Activated B cell treated with CpG ODN at 0.5 μM for 24 hours (primary cell): ENCODE measurements at regions of chr15 and their contacts with region 1.

Region 1: GRCh38 chr15:90931737-90932659 is at the start of gene HDDC3:
- DNase-seq: peak; percentile 95
- ATAC-seq: peak; percentile 56
- H3K4me3 Mint-ChIP-seq: peak within 1 kb of the TSS; percentile 96
- H3K27ac Mint-ChIP-seq: peak within 1 kb of the TSS; percentile 97
- H3K4me1 Mint-ChIP-seq: peaks cover 53% of the 10 kb centered on the region
- H3K27me3 Mint-ChIP-seq: no peaks in the 10 kb centered on the region
- CTCF ChIP-seq: peak; percentile 85
- total RNA-seq, gene HDDC3: 17.6 and 19.0 TPM in 2 replicates

Region 2: DNA sequence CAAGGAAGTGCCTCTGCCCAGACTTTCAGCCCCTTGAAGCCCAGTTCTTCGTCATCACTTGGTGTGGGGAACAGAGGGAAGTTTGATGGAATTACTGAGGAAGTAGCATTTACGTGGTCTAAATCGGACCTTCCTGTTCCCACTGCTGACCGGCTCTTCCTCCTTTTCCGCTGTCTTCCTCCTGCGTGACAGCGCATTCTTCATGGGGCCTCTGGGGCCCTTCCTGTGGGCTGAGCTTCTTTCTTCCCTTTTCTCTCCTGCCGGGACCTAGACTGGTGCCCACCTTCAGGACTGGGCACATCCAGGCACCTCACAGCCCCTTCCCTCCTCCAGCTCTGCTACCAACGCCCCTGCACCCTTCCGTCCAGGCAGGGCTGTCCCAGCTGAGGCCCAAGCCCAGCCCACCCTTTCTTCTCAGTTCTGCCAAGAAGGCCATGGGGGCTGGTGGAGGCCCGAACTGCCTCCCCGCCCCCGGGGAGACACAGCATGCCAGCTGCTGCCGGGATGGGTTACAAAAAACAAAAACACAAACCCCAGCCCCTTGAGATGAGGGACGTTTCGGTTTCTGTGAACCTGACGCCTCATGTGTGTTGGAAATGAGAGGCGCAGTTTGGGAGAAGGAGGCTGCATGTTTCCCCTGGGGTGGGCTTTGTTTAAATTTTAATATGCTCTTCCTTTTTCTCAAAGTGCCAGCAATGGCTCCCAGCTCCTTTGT is 911.8 kb before region 1 on chr15:
- CTCF ChIA-PET with region 1: no interaction called
- POLR2A ChIA-PET with region 1: no interaction called
- intact Hi-C with region 1: no loop called
- DNase-seq: no peak
- ATAC-seq: no peak
- H3K4me3 Mint-ChIP-seq: no peak overlapping the region
- H3K27ac Mint-ChIP-seq: no peak overlapping the region
- H3K4me1 Mint-ChIP-seq: peaks cover 29% of the 10 kb centered on the region
- H3K27me3 Mint-ChIP-seq: no peaks in the 10 kb centered on the region
- CTCF ChIP-seq: no peak

Region 3: DNA sequence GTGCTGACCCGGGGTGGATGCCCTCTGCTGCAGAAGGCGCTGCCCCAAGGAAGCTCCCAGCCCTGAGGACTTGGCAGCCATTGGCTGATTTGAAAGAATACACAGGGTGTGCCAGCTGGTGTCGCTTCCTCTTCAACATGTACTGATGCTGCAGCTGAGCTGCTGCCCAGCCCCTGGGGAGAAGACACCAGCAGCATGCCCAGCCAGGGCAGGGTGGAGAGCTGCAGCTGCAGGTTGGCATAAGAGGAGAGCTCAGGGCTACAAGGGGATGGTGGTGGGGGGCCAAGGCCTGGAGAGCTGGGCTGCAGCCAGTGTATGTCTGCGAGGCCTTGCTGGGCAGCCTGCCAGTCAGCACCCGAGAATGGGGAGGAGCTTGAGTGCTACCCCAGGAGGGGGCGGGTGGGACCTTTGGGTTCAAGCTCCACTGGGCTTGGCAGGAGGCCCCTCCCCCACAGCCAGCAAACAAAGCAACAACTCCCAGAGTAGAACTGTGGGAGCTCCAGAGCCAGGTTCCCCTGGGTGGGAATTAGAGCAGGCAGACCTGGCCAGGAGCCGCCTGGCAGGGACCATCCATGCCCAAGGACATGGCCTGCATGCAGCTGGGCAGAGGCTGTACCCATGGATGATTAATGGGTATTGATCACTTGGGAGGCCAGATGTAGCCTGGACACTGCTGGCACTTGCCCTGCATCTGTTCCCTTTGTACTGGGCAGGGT is 740.0 kb before region 1 on chr15:
- CTCF ChIA-PET with region 1: no interaction called
- POLR2A ChIA-PET with region 1: no interaction called
- intact Hi-C with region 1: loop called (anchors 5 kb)
- DNase-seq: peak; percentile 69
- ATAC-seq: peak; percentile 75
- H3K4me3 Mint-ChIP-seq: peak overlapping the region; percentile 77
- H3K27ac Mint-ChIP-seq: peak overlapping the region; percentile 98
- H3K4me1 Mint-ChIP-seq: peaks cover 97% of the 10 kb centered on the region
- H3K27me3 Mint-ChIP-seq: no peaks in the 10 kb centered on the region
- CTCF ChIP-seq: no peak

Region 4: GRCh38 chr15:90387537-90388461 is 544.2 kb before region 1 on chr15 and contains the start of gene IQGAP1:
- CTCF ChIA-PET with region 1: interaction called, 3 read pairs
- POLR2A ChIA-PET with region 1: interaction called, 10 read pairs
- intact Hi-C with region 1: loop called (anchors 1 kb)
- DNase-seq: peak; percentile 88
- ATAC-seq: peak; percentile 85
- H3K4me3 Mint-ChIP-seq: peak within 1 kb of the TSS; percentile 93
- H3K27ac Mint-ChIP-seq: peak within 1 kb of the TSS; percentile 95
- H3K4me1 Mint-ChIP-seq: peaks cover 47% of the 10 kb centered on the region
- H3K27me3 Mint-ChIP-seq: no peaks in the 10 kb centered on the region
- CTCF ChIP-seq: no peak
- total RNA-seq, gene IQGAP1: 187 and 227 TPM in 2 replicates

Region 5: GRCh38 chr15:90665288-90666134 is 266.5 kb before region 1 on chr15:
- CTCF ChIA-PET with region 1: interaction called, 3 read pairs
- POLR2A ChIA-PET with region 1: interaction called, 4 read pairs
- intact Hi-C with region 1: loop called (anchors 5 kb)
- DNase-seq: peak; percentile 62
- ATAC-seq: peak; percentile 90
- H3K4me3 Mint-ChIP-seq: peak overlapping the region; percentile 85
- H3K27ac Mint-ChIP-seq: peak overlapping the region; percentile 84
- H3K4me1 Mint-ChIP-seq: peaks cover 55% of the 10 kb centered on the region
- H3K27me3 Mint-ChIP-seq: peaks cover 13% of the 10 kb centered on the region
- CTCF ChIP-seq: no peak

Region 6: GRCh38 chr15:90789462-90789861 is 142.5 kb before region 1 on chr15:
- CTCF ChIA-PET with region 1: no interaction called
- POLR2A ChIA-PET with region 1: no interaction called
- intact Hi-C with region 1: no loop called
- DNase-seq: no peak
- ATAC-seq: no peak
- H3K4me3 Mint-ChIP-seq: no peak overlapping the region
- H3K27ac Mint-ChIP-seq: no peak overlapping the region
- H3K4me1 Mint-ChIP-seq: peaks cover 18% of the 10 kb centered on the region
- H3K27me3 Mint-ChIP-seq: no peaks in the 10 kb centered on the region
- CTCF ChIP-seq: no peak

Region 7: DNA sequence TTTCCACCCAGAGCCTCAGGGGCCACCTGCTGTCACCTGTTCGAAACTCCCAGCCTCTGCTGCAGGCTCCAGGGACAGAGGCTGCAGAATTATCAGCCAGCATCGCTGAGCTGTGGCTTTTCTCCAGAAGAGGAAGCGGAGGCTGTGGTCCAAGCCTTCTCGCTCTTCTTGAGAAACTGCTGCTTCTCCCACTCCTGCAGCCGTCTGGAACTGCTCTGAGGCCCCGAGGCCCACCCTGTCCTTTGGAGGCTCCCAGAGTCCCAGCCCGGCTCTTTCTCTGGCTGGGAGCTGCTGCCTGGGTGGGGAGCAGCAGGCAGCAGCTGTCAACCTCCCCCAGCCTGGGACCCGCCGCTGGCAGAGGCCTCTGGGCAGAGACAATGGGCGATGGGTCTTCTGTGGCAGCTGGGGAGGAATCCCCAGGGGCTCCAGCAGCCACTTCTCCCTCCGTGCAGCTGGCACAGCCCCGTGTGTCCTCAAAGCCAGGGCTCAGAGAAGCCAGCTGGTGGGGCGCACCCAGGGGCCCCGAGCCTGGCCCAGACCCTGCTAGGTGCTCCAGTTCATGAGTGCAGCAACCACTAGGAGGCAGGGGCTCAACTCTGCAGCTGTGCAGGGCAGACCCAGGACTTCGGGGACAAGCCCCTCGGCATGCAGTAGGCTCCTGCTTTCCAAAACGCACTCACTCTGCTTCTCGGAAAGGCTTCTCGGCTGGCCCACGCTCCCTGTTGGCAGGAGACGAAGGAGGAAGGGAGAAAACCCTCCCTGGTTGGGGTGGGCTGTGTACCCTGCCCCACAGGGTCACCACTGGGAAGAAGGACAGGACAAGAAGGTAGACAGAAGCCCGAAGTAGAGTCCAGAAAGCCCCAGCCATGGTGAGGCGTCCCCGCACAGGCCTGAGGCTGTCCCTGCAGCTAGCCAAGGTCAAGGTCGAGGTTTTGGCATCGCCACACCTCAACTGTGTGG is 113.5 kb before region 1 on chr15:
- CTCF ChIA-PET with region 1: interaction called, 12 read pairs
- POLR2A ChIA-PET with region 1: interaction called, 7 read pairs
- intact Hi-C with region 1: loop called (anchors 2 kb)
- DNase-seq: peak; percentile 60
- ATAC-seq: peak; percentile 95
- H3K4me3 Mint-ChIP-seq: peak overlapping the region; percentile 41
- H3K27ac Mint-ChIP-seq: peak overlapping the region; percentile 66
- H3K4me1 Mint-ChIP-seq: peaks cover 46% of the 10 kb centered on the region
- H3K27me3 Mint-ChIP-seq: no peaks in the 10 kb centered on the region
- CTCF ChIP-seq: no peak

Region 8: GRCh38 chr15:90902040-90902839 is 29.8 kb before region 1 on chr15:
- CTCF ChIA-PET with region 1: interaction called, 193 read pairs
- POLR2A ChIA-PET with region 1: interaction called, 213 read pairs
- intact Hi-C with region 1: loop called (anchors 1 kb)
- DNase-seq: peak; percentile 75
- ATAC-seq: peak; percentile 71
- H3K4me3 Mint-ChIP-seq: peak overlapping the region; percentile 87
- H3K27ac Mint-ChIP-seq: peak overlapping the region; percentile 86
- H3K4me1 Mint-ChIP-seq: peaks cover 34% of the 10 kb centered on the region
- H3K27me3 Mint-ChIP-seq: no peaks in the 10 kb centered on the region
- CTCF ChIP-seq: no peak

Region 9: DNA sequence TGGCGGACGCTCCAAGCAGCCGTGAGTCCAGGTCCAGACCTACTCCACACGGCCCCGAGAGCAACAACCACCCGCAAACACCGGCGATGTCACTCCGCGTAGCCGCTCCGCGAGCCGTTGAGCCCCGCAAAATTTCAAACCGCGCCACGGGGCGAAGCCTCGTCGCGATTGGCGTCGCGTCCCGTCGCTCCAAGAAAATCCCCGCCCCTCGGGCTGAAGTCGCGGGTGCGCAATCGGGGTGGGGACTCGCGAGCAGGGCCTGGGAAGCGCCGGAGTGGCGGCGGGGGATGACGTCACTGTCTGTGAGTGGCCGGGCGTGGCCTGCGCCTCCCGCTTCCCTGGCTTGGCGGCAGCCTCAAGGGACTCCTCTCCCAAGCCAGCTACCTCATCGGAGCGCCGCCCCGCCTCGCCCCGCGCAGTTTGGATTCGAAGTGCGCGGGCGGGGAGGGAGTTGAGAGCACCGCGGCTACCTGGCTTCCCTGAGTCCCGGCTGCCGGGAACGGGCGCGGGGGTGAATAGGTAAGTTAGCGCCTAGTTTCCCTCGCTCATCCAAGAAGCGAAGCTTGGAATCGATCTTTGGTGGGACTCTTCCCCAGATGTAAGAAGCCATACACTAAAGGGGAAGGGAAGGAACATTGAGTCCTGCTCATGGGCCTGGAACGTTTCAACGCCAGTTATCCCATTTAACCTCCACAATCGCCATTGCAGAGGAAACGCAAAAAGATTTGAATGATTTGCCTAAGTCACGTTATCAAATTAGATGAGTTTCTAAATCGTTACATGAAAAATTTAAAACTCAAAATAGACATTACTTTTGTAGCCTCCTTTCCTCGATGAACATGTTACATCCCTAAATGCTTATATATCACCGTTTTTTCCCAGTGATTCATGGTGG is 62.7 kb after region 1 on chr15 and contains the start of gene PRC1:
- CTCF ChIA-PET with region 1: no interaction called
- POLR2A ChIA-PET with region 1: interaction called, 4 read pairs
- intact Hi-C with region 1: loop called (anchors 1 kb)
- DNase-seq: peak; percentile 95
- ATAC-seq: peak; percentile 96
- H3K4me3 Mint-ChIP-seq: peak within 1 kb of the TSS; percentile 99
- H3K27ac Mint-ChIP-seq: peak within 1 kb of the TSS; percentile 96
- H3K4me1 Mint-ChIP-seq: peaks cover 23% of the 10 kb centered on the region
- H3K27me3 Mint-ChIP-seq: no peaks in the 10 kb centered on the region
- CTCF ChIP-seq: no peak
- total RNA-seq, gene PRC1: 8.1 and 9.3 TPM in 2 replicates